Cardiac septum (tissue), 1 donor: ENCODE measurements at regions of chr2 and their contacts with region 1.

Region 1: GRCh38 chr2:182650704-182651103 is 65.4 kb upstream of the DNAJC10 start:
- DNase-seq: no peak

Region 2: DNA sequence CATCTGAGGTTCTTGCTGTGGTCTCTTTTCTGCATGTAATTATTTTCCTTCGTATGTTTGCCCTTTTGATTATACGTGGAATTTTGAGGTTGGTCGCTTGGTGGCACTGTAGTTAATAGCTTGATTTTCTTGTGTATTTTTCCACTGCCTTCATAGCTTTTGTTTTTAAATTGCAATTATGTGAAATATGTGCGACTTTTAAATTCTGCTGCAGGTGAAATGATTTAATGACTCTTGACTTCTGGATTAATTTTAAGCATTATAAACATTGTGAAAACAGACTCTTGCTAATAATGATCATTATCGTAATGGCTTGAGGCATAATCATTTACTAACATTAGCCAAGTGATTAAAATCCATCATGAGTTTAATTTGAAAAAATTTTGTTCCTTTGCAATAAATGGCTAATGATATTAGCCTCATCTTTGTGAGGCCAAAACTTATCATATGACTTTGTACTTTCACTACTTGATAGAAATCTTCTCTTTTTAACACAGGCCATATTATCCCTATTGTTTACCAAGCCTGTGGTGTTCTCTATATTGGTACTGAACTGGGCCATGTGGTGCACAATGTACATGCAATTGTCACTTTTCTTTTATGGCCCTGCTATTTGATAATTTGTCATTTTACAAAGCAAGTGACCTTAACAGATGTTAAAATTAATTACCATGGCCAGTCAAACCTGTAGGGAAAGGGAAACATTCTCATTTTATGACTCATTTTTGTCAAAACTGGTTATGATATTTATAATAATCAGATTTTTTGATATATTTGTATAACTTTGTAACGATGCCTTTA is 907.6 kb before region 1 on chr2:
- intact Hi-C with region 1: loop called (anchors 10 kb)
- DNase-seq: no peak

Region 3: DNA sequence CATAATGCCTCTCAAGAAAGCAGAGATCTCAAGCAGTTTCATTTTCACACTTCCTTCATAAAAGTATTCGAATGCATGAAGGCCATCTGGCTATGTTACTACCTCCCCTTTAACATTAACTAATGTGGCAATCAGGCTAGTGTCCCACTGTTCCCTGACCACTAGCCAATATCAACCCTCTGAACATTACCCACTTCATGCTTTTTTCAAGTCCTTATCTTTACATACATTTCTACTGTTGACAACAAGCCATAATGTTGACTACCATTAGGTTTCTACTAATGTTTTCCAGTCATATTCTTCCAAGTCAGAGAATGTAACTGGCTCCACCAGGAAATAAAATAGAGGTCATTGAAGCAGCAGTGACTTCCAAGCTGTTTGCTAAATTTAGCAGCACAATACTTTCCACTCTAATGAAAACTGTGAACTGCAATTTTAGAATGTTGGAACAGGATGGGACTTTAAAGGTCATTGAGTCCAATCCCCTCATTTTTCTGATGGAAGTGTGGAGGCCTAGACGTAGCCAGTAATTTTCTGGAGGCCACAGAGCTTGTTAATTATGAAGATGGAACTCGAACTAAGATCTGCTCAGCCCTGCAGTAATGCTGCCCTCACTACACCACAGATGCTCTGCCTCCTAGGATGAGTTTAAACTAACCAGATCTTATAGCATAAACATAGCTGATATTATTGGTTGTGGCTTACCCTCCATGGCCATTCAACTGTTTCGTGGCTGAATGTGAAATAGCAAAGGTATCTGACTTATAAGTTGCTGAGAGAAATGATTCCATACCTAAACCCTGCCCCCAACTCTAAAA is 665.7 kb before region 1 on chr2:
- intact Hi-C with region 1: loop called (anchors 10 kb)
- DNase-seq: no peak

Region 4: GRCh38 chr2:182097571-182098164 is 553.0 kb before region 1 on chr2:
- intact Hi-C with region 1: loop called (anchors 10 kb)
- DNase-seq: no peak

Region 5: DNA sequence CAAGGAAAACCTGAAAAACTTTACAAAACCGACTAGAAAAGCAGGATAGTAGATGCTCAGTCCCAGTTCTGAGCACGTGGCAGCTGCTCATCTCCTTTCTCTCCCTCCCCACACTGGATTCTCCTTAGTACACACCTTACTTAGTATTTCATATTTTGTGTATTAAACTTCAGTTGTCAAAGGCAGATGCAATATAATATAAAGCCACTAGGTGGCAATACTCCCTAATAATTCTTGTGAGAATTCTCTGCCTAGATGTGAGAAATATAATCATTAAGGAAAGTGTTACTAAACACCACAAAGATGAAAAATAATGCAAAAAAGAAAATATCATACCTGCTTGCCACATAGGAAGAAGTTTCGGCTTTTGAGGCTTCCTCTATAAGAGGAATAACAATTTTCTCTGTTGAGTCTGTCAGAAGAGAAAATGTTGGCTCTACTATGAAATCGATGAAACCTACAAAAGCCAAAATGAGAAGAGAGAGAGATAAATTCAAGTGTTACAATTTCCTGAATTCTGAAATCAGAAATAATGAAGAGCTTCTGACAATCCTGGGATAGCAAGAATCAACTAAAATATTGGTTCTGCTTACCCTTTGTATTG is 464.5 kb before region 1 on chr2:
- intact Hi-C with region 1: loop called (anchors 1 kb)
- DNase-seq: no peak

Region 6: GRCh38 chr2:182240862-182241371 is 409.8 kb before region 1 on chr2:
- intact Hi-C with region 1: loop called (anchors 5 kb)
- DNase-seq: no peak

Region 7: DNA sequence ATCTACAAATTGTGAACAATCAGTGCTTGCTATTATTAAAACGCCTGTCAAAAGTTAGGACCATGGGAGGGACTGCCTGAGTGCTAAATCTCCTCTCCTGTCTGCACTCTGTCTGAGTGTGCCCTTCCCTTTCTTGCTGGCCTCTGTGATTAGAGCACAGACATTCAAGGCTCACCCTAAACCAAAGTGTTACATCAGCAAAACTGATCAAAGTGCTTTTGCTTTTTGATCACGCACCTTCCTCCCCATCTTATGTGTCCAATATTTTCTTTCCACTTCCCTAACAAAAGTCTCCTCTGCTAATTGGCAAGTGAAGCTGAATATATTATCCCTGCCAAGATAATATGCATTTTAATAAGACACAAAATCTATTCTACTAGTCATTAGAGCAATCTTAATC is 34.9 kb after region 1 on chr2:
- intact Hi-C with region 1: no loop called
- DNase-seq: no peak

Region 8: DNA sequence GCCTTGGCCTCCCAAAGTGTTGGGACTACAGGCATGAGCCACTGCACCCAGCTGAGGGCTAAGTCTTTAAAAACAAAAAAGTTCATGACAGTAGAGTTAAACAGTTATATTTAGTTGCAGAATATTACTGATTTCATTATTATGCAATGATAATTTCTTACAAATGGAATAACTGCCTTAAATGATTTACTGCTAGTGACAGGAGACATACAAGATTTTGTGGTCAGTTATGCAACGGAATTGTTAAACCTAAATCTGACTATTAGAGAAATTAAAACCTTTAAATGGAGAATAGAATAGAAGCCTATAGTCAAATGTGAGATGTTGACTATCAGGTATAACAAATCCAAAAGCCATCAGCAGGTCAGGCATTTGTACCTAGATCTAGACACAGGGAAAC is 55.1 kb after region 1 on chr2:
- intact Hi-C with region 1: no loop called
- DNase-seq: no peak

Region 9: GRCh38 chr2:182792441-182792840 is 141.7 kb after region 1 on chr2:
- intact Hi-C with region 1: no loop called
- DNase-seq: no peak